Vagina (tissue), 2 donors: ENCODE measurements at regions of chr13 and their contacts with region 1.

Region 1: GRCh38 chr13:50731400-50731799 is 112.1 kb downstream of the DLEU7 start:
- DNase-seq: no peak
- H3K4me3 ChIP-seq: no peak overlapping the region
- H3K27ac ChIP-seq: no peak overlapping the region
- H3K4me1 ChIP-seq: no peaks in the 10 kb centered on the region
- H3K27me3 ChIP-seq: no peaks in the 10 kb centered on the region
- CTCF ChIP-seq: no peak
- POLR2A ChIP-seq: no peak

Region 2: DNA sequence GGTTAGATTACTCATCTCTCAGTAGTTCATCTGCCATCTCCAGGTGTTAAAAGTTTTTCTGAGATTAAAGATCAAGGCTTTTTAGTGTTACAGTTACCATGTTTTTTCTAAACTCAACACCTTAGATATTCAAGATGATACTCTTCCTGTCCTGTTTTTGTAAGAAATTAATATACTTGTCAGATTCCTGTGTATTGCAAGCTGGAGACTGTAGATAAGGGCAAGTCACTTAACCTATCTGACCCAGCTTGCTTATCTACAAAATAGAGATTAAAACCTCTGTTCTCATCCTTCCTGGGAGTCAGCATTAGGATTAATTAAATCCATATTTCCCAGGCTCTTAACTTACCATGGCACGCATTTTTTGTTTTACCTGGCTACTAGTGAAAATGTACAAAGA is 1946.4 kb after region 1 on chr13:
- intact Hi-C with region 1: loop called (anchors 5 kb)
- DNase-seq: no peak
- H3K4me3 ChIP-seq: no peak overlapping the region
- H3K27ac ChIP-seq: no peak overlapping the region
- H3K4me1 ChIP-seq: no peaks in the 10 kb centered on the region
- H3K27me3 ChIP-seq: no peaks in the 10 kb centered on the region
- CTCF ChIP-seq: no peak
- POLR2A ChIP-seq: no peak